Panc1 (cell line): ENCODE measurements at regions of chr12 and their contacts with region 1.

Region 1: GRCh38 chr12:46372544-46373110 is at the start of gene SLC38A2:
- DNase-seq: no peak
- ATAC-seq: peak; percentile 88
- H3K4me3 ChIP-seq: peak within 1 kb of the TSS; percentile 93 to 99
- H3K27ac ChIP-seq: peak within 1 kb of the TSS; percentile 100
- H3K4me1 ChIP-seq: peaks cover 40% of the 10 kb centered on the region
- H3K27me3 ChIP-seq: no peaks in the 10 kb centered on the region
- CTCF ChIP-seq: no peak
- total RNA-seq, gene SLC38A2: 341 TPM

Region 2: DNA sequence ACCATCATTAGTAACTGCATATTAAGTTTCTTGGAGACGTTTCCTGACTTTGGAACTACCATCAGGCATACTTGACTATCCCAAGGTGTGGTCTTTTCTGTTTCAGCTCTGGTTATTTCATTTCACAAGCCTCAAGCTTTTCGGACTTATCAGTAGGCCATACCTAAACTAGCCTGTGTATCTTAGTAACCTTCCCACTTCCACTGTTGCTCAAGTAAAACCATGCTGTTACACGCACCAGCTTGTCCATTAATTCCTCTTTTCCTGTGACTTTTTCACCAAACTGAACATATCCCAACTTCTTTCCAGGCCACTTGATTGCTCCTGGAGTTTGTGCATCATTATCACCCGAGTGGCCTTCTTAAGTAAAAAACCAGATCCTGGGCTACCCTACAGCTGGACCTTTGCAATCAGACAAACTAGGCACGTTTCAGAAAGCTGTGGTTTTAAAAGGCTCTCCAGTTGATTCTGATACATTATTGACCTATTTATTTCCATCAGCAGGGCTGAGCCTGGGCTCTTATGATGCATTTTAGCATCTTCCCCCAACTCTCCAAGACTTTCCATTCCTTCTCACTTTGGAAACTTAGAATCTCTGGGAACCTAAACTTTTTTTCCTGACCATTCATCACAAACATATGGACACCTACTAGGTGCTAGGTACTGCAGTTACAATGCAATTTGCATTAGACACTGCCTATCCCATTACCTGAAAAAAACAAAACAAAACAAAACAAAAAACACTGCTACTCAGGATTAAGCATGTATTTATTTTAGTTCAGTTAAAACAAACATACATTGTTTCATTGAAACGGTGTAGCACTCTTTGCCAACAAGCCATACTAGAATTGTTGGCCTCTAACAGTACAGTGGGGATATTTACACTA is 14.9 kb before region 1 on chr12:
- CTCF ChIA-PET with region 1: no interaction called
- POLR2A ChIA-PET with region 1: no interaction called
- in situ Hi-C with region 1: no loop called
- intact Hi-C with region 1: no loop called
- DNase-seq: no peak
- ATAC-seq: peak; percentile 76
- H3K4me3 ChIP-seq: no peak overlapping the region
- H3K27ac ChIP-seq: peak overlapping the region; percentile 48
- H3K4me1 ChIP-seq: peaks cover 54% of the 10 kb centered on the region
- H3K27me3 ChIP-seq: no peaks in the 10 kb centered on the region
- CTCF ChIP-seq: no peak

Region 3: DNA sequence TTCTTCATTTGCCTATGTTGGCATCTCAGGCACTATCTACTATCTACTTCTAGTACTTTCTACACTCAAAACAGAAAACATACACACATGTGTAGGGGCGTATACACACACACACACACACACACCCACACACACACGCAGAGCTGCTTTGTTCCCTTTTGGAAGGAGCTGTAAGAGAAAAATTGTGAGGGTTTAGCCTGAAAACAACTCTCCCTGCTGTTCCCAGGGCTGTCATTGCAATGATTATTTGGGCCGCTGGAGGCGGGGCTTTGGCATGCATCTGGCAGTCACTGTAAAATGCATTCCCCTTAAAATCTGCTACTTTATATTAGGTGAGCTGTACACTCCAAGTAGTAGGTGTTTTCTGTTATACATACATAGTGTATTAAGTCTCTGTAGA is 29.0 kb after region 1 on chr12:
- CTCF ChIA-PET with region 1: no interaction called
- POLR2A ChIA-PET with region 1: interaction called, 17 read pairs
- in situ Hi-C with region 1: no loop called
- intact Hi-C with region 1: no loop called
- DNase-seq: no peak
- ATAC-seq: no peak
- H3K4me3 ChIP-seq: no peak overlapping the region
- H3K27ac ChIP-seq: peak overlapping the region; percentile 76; the same call in 1 of the 2 replicates
- H3K4me1 ChIP-seq: peaks cover 15% of the 10 kb centered on the region
- H3K27me3 ChIP-seq: no peaks in the 10 kb centered on the region
- CTCF ChIP-seq: peak; percentile 18; the same call in 1 of the 2 replicates

Region 4: GRCh38 chr12:46430340-46430948 is 57.8 kb after region 1 on chr12:
- CTCF ChIA-PET with region 1: no interaction called
- POLR2A ChIA-PET with region 1: interaction called, 15 read pairs
- in situ Hi-C with region 1: no loop called
- intact Hi-C with region 1: no loop called
- DNase-seq: peak; percentile 94
- ATAC-seq: peak; percentile 88
- H3K4me3 ChIP-seq: no peak overlapping the region
- H3K27ac ChIP-seq: peak overlapping the region; percentile 99
- H3K4me1 ChIP-seq: peaks cover 56% of the 10 kb centered on the region
- H3K27me3 ChIP-seq: no peaks in the 10 kb centered on the region
- CTCF ChIP-seq: no peak

Region 5: GRCh38 chr12:46473634-46474329 is 101.2 kb after region 1 on chr12:
- CTCF ChIA-PET with region 1: no interaction called
- POLR2A ChIA-PET with region 1: no interaction called
- in situ Hi-C with region 1: no loop called
- intact Hi-C with region 1: loop called (anchors 5 kb)
- DNase-seq: no peak
- ATAC-seq: peak; percentile 96
- H3K4me3 ChIP-seq: peak overlapping the region; percentile 11 to 23; a peak in 3 of 4 replicates
- H3K27ac ChIP-seq: peak overlapping the region; percentile 94
- H3K4me1 ChIP-seq: peaks cover 50% of the 10 kb centered on the region
- H3K27me3 ChIP-seq: no peaks in the 10 kb centered on the region
- CTCF ChIP-seq: no peak

Region 6: DNA sequence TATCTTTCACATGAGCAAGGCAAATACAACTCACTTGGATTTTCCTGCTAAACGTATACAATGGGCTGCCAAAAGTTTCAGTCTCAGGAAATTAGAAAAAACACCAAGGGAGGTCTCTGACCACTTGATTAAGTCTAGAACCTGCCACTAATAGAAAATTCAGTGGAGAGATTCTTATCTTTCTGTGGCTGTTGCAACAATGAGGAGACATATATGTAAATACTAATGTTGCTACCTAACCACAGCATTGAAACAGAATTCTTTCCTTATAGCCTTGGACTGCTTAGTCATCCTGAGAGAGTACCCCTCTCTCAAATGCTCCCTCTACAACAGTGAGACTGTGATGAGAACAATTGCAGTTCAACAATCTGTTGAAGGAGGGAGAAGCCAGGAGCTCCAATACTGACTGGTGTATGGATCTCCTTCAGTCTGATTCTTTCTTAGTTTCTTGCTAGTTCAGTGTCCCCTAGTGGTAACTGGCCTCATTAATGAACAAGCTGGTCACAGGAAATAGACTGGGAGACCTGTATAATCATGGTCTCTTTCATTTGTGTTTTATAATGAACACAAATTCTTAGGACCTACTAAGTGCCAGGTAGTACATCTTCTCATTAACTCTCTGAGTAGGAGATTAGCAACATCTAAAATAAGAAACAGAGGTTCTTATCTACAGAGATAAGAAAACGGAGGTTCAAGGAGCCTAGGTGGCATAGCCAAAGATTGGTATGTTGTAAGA is 288.7 kb after region 1 on chr12:
- CTCF ChIA-PET with region 1: no interaction called
- POLR2A ChIA-PET with region 1: interaction called, 3 read pairs
- in situ Hi-C with region 1: no loop called
- intact Hi-C with region 1: loop called (anchors 5 kb)
- DNase-seq: peak; percentile 87
- ATAC-seq: peak; percentile 65
- H3K4me3 ChIP-seq: no peak overlapping the region
- H3K27ac ChIP-seq: peak overlapping the region; percentile 89
- H3K4me1 ChIP-seq: peaks cover 79% of the 10 kb centered on the region
- H3K27me3 ChIP-seq: no peaks in the 10 kb centered on the region
- CTCF ChIP-seq: peak; percentile 84